ENCODE measurements at regions of chr6 and their contacts with region 1.

Region 1: DNA sequence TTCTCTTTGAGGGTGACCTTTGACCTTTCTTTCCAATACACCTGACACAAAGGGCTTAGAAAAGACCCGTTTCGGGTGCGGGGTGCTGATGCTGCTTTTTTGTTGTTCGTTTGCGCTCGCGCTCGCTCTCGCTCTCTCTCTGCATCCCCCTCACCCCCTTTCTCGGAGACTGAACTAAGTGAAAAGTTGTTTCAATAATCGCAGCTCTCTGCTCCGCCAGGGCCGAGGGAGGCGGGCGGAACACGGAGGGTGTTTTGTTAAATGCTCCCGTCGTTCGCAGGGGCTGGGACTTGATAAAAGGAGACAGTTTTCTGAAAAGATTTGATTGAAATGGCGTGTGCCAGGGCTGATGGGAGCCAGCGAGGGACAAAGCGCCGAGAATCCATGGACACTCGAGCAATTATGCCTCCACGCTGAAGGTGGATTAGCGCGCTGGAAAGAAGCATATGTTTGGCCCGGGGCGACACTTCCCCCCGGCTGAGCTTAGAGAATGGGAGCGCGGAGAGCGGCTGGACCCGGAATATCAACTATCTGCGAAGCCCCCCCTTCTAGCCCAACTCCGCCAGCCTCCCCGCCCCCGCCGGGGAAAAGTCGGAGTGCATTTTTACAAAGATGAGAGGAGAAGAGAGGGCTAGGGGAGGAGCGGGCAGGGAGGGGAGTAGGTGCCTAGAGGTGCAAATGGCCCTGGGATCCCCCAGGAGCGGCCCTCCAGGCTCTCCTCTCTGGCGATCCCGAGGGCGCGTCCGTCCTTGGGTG is 25.0 kb downstream of the TFAP2A start:
- DNase-seq: no peak
- H3K4me3 Mint-ChIP-seq: no peak overlapping the region
- H3K27ac Mint-ChIP-seq: peak overlapping the region; percentile 41
- H3K4me1 Mint-ChIP-seq: no peaks in the 10 kb centered on the region
- H3K27me3 Mint-ChIP-seq: peaks cover 94% of the 10 kb centered on the region

Region 2: DNA sequence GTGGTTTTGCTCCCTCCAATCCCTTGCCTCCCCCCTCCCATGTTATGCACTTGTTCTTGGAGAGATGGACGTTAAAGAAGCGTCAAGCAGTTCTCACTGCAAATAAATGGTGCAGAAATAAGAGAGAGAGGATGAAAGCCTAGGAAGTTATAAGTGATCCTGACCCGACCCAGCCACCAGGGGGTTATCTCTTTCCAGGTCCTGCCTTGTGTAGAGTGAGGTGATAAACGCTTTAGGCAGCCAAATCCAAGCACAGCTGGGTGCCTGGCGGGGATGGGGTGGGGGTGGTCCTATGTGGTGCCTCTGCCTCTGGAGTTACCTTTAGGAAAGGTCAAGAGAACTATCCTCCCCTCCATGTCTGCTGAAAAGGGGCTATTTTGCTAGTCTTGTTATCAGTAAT is 34.1 kb after region 1 on chr6:
- intact Hi-C with region 1: loop called (anchors 2 kb)
- DNase-seq: no peak
- H3K4me3 Mint-ChIP-seq: no peak overlapping the region
- H3K27ac Mint-ChIP-seq: no peak overlapping the region
- H3K4me1 Mint-ChIP-seq: peaks cover 5% of the 10 kb centered on the region
- H3K27me3 Mint-ChIP-seq: peaks cover 87% of the 10 kb centered on the region